Activated T-helper 2 cell treated with anti-CD3 and anti-CD28 coated beads, Interferon-gamma antibody, Interleukin-2, Interleukin-4, amounts not matched to agents 10 μg/mL and 5 μg/mL and 100 μg/mL, durations not matched to agents 14 hours and 24 hours and 36 hours (primary cell): ENCODE measurements at regions of chrX and their contacts with region 1.

Region 1: GRCh38 chrX:69493193-69493592 is 10.9 kb upstream of the NALF2 start:
- DNase-seq: no peak
- H3K4me3 Mint-ChIP-seq: no peak overlapping the region
- H3K27ac Mint-ChIP-seq: no peak overlapping the region
- H3K4me1 Mint-ChIP-seq: no peaks in the 10 kb centered on the region
- H3K27me3 Mint-ChIP-seq: peaks cover 3% of the 10 kb centered on the region

Region 2: DNA sequence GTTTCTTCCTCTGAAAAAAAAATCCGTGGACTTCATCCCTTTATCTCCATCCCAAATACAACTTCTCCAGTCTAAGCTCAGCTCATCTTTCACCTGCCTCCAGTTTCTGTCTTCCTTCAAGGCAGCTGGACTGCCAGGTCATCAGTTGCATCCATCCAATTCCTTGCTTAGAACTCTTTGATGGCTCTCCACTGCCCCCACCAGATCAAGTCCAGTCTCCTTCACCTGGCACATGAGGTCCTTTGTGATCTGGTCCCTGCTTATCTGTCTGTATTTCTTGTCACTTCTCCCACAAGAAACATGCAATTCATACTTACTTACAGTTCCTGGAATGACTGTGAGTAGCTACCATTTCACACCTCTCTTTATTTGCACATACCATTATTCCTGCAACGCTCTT is 602.9 kb after region 1 on chrX:
- intact Hi-C with region 1: loop called (anchors 5 kb)
- DNase-seq: no peak
- H3K4me3 Mint-ChIP-seq: no peak overlapping the region
- H3K27ac Mint-ChIP-seq: no peak overlapping the region
- H3K4me1 Mint-ChIP-seq: no peaks in the 10 kb centered on the region
- H3K27me3 Mint-ChIP-seq: peaks cover 3% of the 10 kb centered on the region